ENCODE measurements at regions of chr3 and their contacts with region 1.

Region 1: DNA sequence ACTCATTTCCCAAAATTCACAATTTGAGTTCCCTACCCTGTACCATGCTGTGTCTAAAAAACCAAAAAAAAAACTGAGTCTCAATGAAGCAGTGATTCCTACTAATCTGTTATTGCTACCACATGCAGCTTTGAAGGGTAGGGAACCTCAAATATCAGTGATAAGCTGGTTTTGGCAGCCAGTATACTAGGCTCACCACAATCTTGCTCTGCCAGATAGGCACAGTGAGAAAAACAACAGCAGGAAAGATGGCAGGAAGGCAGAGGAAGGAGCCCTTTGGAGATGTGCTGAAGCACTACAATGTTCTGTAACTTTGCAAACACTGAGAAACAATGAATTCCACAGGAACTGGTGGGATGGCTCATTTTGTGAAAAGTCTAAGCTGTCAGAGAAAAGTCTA is 96.9 kb upstream of the UBP1 start:
- DNase-seq: no peak
- ATAC-seq: peak; percentile 71

Region 2: GRCh38 chr3:33392703-33393125 is 144.4 kb before region 1 on chr3:
- intact Hi-C with region 1: no loop called
- DNase-seq: no peak
- ATAC-seq: no peak

Region 3: GRCh38 chr3:33440323-33441232 is 96.6 kb before region 1 on chr3 and contains the start of gene UBP1:
- intact Hi-C with region 1: loop called (anchors 2 kb)
- DNase-seq: peak; percentile 100
- ATAC-seq: peak; percentile 98
- total RNA-seq, gene UBP1: 42.3 TPM